Activated CD4-positive, alpha-beta T cell treated with anti-CD3 and anti-CD28 coated beads for 36 hours (primary cell): ENCODE measurements at regions of chr1 and their contacts with region 1.

Region 1: GRCh38 chr1:205255941-205256780 is 28.4 kb downstream of the TMCC2 start:
- DNase-seq: peak; percentile 93
- ATAC-seq: peak; percentile 95
- H3K4me3 Mint-ChIP-seq: no peak overlapping the region
- H3K27ac Mint-ChIP-seq: no peak overlapping the region
- H3K4me1 Mint-ChIP-seq: peaks cover 2% of the 10 kb centered on the region
- H3K27me3 Mint-ChIP-seq: no peaks in the 10 kb centered on the region

Region 2: DNA sequence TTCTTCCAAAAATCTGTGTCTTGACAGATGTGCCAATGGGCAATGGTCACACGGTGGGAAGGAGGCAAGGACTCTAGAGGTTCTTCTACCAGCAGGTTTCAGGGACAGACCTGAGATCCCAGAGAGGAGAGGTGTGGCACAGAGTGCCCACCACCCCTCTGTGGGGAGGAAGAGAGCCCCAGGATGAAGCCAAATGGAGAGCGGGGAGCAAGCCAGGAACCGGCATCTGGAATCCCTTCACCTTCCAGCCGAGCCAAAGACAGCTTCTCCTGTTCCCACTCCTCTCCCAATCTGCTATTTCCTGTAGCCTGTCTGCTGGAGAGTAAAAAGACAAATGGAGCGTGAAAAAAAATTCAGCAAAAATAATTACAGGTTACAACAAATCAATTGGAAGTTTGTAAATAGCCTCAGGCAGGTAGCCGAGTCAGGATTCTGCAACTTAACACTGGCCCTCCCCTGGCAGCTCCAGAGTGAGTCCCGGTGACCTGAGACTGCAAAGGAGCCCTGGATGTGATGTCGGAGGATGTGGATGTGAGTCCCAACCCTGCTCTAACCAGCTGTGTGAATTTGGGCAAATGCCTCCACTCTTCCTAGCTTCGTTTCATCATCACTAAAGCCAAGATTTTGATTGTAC is 525.2 kb before region 1 on chr1:
- CTCF ChIA-PET with region 1: no interaction called
- POLR2A ChIA-PET with region 1: no interaction called
- intact Hi-C with region 1: no loop called
- DNase-seq: no peak
- ATAC-seq: no peak
- H3K4me3 Mint-ChIP-seq: no peak overlapping the region
- H3K27ac Mint-ChIP-seq: no peak overlapping the region
- H3K4me1 Mint-ChIP-seq: peaks cover 3% of the 10 kb centered on the region
- H3K27me3 Mint-ChIP-seq: no peaks in the 10 kb centered on the region

Region 3: GRCh38 chr1:204801211-204801610 is 454.9 kb before region 1 on chr1:
- CTCF ChIA-PET with region 1: no interaction called
- POLR2A ChIA-PET with region 1: no interaction called
- intact Hi-C with region 1: no loop called
- DNase-seq: no peak
- ATAC-seq: no peak
- H3K4me3 Mint-ChIP-seq: no peak overlapping the region
- H3K27ac Mint-ChIP-seq: no peak overlapping the region
- H3K4me1 Mint-ChIP-seq: peaks cover 5% of the 10 kb centered on the region
- H3K27me3 Mint-ChIP-seq: no peaks in the 10 kb centered on the region

Region 4: DNA sequence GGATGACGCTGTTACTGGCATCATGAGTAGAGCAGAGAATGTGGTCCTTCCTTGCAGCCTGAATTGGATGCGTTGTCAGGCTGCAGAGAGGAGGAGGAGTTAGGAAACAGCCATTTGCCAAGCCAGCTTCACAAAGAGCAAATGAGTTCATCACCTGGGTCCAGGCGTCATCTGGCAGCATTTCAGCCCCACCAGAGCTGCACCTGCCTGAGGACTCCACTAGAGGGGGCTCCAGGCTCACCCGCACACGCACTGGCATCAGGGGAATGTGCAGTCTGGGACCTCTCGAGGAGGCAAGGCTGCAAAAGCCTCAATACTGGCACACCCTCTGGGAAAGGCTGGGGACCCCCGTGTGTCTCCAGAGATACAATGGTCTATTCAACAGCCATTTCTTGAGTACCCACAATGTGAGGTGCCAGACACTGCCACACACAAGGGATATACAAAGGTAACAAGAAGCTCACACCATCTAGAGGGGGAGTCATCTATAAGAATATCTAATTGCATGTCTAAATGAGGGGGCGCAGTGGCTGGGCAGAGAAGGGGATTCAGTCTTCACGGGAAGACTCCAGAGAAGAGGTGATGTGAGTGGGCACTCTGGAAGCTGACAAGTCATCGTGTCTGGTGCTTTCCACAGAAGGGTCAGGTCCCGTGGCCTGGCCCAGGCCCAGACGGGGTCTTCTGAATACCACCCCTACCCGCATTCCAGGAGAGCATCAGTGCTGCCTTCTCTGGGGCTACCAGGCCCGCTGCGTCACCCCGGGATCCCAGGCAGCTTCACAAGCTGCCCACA is 266.7 kb before region 1 on chr1:
- CTCF ChIA-PET with region 1: interaction called, 4 read pairs
- POLR2A ChIA-PET with region 1: no interaction called
- intact Hi-C with region 1: loop called (anchors 1 kb)
- DNase-seq: peak; percentile 82
- ATAC-seq: peak; percentile 89
- H3K4me3 Mint-ChIP-seq: no peak overlapping the region
- H3K27ac Mint-ChIP-seq: no peak overlapping the region
- H3K4me1 Mint-ChIP-seq: peaks cover 11% of the 10 kb centered on the region
- H3K27me3 Mint-ChIP-seq: peaks cover 5% of the 10 kb centered on the region

Region 5: DNA sequence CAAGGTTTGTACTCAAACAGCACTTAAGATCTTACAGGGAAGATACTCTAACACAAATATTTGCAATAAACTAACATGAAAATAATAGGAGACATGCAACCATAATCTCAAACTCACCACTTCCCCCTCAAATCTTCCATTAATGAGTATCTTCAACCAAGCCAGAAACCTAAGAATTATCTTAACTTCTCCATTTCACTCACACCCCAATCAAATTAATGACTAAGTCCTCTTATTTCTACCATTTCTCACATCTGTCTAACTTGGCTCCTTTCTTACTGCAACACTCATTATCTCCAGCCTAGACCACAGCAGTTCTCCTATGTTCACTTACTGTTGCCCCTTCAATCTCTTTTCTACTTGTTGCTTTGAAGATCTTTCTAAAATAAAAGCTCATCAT is 144.8 kb before region 1 on chr1:
- CTCF ChIA-PET with region 1: interaction called, 10 read pairs
- POLR2A ChIA-PET with region 1: no interaction called
- intact Hi-C with region 1: no loop called
- DNase-seq: no peak
- ATAC-seq: peak; percentile 30
- H3K4me3 Mint-ChIP-seq: no peak overlapping the region
- H3K27ac Mint-ChIP-seq: peak overlapping the region; percentile 4
- H3K4me1 Mint-ChIP-seq: peaks cover 8% of the 10 kb centered on the region
- H3K27me3 Mint-ChIP-seq: no peaks in the 10 kb centered on the region

Region 6: DNA sequence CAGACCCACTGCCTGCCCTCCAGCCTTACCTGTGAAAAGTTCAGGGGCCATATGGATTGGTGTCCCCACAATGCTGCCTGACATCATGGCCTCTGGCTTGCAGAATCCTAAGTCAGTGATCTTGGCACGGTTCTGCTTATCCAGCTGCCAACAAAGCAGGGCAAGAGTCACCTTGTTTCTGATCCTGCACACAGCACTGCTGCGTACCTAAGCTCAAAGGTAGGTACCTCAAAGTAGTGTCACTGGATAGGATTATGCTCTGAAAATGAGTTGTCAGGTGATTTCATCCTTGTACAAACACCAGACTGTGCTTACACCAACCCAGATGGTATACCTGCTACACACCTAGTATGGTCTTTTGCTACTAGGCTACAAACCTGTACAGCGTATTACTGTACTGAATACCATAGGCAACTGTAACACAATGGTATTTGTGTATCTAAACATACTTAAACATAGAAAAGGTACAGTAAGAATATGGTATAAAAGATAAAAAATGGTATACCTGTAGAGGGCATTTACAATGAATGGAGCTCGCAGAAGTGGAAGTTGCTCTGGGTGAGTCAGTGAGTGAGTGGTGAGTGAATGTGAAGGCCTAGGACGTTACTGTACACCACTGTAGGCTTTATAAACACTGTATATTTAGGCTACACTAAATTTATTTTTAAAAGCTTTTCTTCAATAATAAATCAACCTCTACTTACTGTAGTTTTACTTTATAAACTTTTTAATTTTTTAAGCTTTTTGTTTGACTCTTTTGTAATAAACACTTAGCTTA is 105.3 kb before region 1 on chr1:
- CTCF ChIA-PET with region 1: interaction called, 15 read pairs
- POLR2A ChIA-PET with region 1: interaction called, 3 read pairs
- intact Hi-C with region 1: no loop called
- DNase-seq: no peak
- ATAC-seq: no peak
- H3K4me3 Mint-ChIP-seq: no peak overlapping the region
- H3K27ac Mint-ChIP-seq: no peak overlapping the region
- H3K4me1 Mint-ChIP-seq: no peaks in the 10 kb centered on the region
- H3K27me3 Mint-ChIP-seq: no peaks in the 10 kb centered on the region

Region 7: GRCh38 chr1:205321164-205321958 is 65.2 kb after region 1 on chr1 and contains the start of gene NUAK2:
- CTCF ChIA-PET with region 1: interaction called, 22 read pairs
- POLR2A ChIA-PET with region 1: no interaction called
- intact Hi-C with region 1: no loop called
- DNase-seq: peak; percentile 90
- ATAC-seq: peak; percentile 85
- H3K4me3 Mint-ChIP-seq: peak within 1 kb of the TSS; percentile 88
- H3K27ac Mint-ChIP-seq: peak within 1 kb of the TSS; percentile 90
- H3K4me1 Mint-ChIP-seq: peaks cover 65% of the 10 kb centered on the region
- H3K27me3 Mint-ChIP-seq: no peaks in the 10 kb centered on the region
- total RNA-seq, gene NUAK2: 2.3 to 2.7 TPM

Region 8: DNA sequence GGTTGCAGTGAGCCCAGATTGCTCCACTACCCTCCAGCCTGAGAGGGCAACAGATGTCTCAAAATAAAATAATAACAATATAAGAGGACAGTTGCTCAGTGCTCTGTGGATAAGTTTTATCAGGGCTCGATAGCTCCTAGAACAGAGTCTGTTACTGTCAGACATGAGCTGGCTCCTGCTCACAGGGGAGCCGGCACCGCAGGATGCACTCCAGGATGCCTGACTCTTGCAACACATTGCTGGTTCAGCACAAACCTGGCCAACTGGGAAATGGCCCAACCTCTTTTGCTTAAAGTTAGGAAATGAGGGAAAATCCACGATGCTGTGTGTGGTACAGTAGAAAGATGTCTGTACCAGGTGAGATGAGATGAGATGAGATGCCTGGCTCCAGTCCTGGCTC is 773.3 kb after region 1 on chr1:
- CTCF ChIA-PET with region 1: no interaction called
- POLR2A ChIA-PET with region 1: no interaction called
- intact Hi-C with region 1: no loop called
- DNase-seq: no peak
- ATAC-seq: no peak
- H3K4me3 Mint-ChIP-seq: no peak overlapping the region
- H3K27ac Mint-ChIP-seq: no peak overlapping the region
- H3K4me1 Mint-ChIP-seq: peaks cover 4% of the 10 kb centered on the region
- H3K27me3 Mint-ChIP-seq: peaks cover 21% of the 10 kb centered on the region